ENCODE measurements at regions of chr16 and their contacts with region 1.

Region 1: GRCh38 chr16:28063641-28064061 is at the start of gene GSG1L:
- DNase-seq: peak in 1 of 3 donors; percentile 65
- ATAC-seq: peak in 1 of 2 donors; percentile 52
- H3K4me3 ChIP-seq: peak within 1 kb of the TSS; percentile 73
- H3K27ac ChIP-seq: peak within 1 kb of the TSS; percentile 31
- H3K4me1 ChIP-seq: peaks cover 3% of the 10 kb centered on the region
- H3K27me3 ChIP-seq: no peaks in the 10 kb centered on the region
- total RNA-seq, gene GSG1L: 29.5 to 44.8 (median 35.0) TPM

Region 2: GRCh38 chr16:27639561-27640276 is 423.9 kb before region 1 on chr16:
- intact Hi-C with region 1: loop called in 1 of 4 experiments (anchors 10 kb)
- DNase-seq: no peak
- ATAC-seq: peak; percentile 60 to 65
- H3K4me3 ChIP-seq: no peak overlapping the region
- H3K27ac ChIP-seq: no peak overlapping the region
- H3K4me1 ChIP-seq: no peaks in the 10 kb centered on the region
- H3K27me3 ChIP-seq: no peaks in the 10 kb centered on the region

Region 3: GRCh38 chr16:27972500-27972899 is 91.2 kb before region 1 on chr16:
- intact Hi-C with region 1: loop called in 3 of 4 experiments (anchors 5 kb)
- DNase-seq: no peak
- ATAC-seq: peak in 1 of 2 donors; percentile 15
- H3K4me3 ChIP-seq: no peak overlapping the region
- H3K27ac ChIP-seq: no peak overlapping the region
- H3K4me1 ChIP-seq: no peaks in the 10 kb centered on the region
- H3K27me3 ChIP-seq: no peaks in the 10 kb centered on the region

Region 4: GRCh38 chr16:27977966-27978365 is 85.7 kb before region 1 on chr16:
- intact Hi-C with region 1: loop called in 3 of 4 experiments (anchors 5 kb)
- DNase-seq: peak; percentile 51 to 82 (median 79)
- ATAC-seq: peak; percentile 71 to 78
- H3K4me3 ChIP-seq: no peak overlapping the region
- H3K27ac ChIP-seq: peak overlapping the region; percentile 48
- H3K4me1 ChIP-seq: peaks cover 2% of the 10 kb centered on the region
- H3K27me3 ChIP-seq: no peaks in the 10 kb centered on the region

Measured in right cardiac atrium (tissue), 5 donors.